ENCODE measurements at regions of chr4 and their contacts with region 1.

Region 1: DNA sequence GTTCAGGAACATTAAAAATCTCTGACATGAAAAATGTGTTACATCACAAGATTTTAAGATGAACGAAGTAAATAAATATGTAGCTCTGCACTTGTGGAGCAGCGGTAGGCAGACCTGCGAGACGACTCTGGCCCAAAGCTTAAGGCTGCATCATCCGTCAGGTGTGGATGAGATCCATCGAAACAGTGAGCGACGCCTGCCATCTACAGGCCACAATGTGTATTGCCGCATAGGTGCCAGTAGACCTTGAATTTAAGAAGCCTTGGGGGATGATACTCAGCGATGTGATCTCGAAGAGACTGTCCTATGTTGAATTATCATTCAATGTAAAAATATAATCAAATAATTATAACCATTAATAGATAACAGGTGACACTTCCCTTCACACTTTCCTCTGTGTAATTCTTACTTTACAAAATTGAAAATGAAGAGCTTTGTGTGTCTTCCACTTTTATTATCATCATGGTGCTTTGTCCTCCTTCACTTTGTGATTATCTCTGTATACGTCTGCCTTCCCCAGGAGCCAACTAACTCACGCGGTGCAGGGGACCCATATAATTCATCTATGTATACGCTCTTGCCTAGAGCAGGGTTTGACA is 851.0 kb downstream of the RAB28 start:
- DNase-seq: peak; percentile 87
- H3K4me3 Mint-ChIP-seq: no peak overlapping the region
- H3K27ac Mint-ChIP-seq: no peak overlapping the region
- H3K4me1 Mint-ChIP-seq: no peaks in the 10 kb centered on the region
- H3K27me3 Mint-ChIP-seq: peaks cover 21% of the 10 kb centered on the region

Region 2: DNA sequence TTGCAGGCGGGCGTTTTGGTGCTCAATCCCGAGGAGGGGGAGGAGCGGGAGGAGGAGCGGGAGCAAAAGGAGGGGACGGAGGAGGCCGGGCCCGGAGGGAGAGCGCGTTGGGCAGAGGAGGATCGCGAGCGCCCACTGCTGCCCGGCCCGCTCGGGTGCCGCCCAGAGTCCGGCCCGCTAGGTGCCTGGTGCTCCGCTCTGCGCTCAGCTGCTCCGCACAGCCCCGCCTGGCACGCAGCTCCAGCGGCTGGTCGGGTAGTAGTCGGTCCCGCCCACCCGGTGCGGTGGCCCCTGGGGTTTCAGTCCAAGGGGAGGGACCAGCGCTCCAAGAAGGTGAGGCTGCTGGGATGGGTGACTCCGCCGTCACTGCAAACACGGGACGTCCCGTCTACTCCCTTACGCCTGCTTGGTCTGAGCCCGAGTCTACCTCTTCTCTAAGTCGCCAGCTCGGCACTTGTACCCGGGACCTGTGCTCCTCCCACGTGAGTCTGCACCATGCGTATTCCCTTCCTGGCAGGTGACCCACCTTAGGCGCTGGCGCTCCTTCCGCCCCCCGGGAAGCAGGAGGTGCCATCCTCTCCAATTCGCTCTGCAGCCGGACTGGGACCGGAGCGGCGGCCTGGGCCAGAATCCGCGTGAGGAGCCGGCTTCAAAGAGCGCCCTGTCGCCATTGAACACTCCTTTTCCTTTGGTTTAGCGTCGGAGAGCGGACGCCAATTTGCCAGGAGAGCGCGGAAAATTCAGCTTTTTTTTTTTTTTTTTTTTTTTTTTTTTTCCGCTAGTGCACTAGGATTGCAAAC is 1204.1 kb before region 1 on chr4:
- CTCF ChIA-PET with region 1: no interaction called
- intact Hi-C with region 1: loop called (anchors 10 kb)
- DNase-seq: peak; percentile 64
- H3K4me3 Mint-ChIP-seq: peak overlapping the region; percentile 63
- H3K27ac Mint-ChIP-seq: no peak overlapping the region
- H3K4me1 Mint-ChIP-seq: peaks cover 14% of the 10 kb centered on the region
- H3K27me3 Mint-ChIP-seq: peaks cover 31% of the 10 kb centered on the region

Region 3: DNA sequence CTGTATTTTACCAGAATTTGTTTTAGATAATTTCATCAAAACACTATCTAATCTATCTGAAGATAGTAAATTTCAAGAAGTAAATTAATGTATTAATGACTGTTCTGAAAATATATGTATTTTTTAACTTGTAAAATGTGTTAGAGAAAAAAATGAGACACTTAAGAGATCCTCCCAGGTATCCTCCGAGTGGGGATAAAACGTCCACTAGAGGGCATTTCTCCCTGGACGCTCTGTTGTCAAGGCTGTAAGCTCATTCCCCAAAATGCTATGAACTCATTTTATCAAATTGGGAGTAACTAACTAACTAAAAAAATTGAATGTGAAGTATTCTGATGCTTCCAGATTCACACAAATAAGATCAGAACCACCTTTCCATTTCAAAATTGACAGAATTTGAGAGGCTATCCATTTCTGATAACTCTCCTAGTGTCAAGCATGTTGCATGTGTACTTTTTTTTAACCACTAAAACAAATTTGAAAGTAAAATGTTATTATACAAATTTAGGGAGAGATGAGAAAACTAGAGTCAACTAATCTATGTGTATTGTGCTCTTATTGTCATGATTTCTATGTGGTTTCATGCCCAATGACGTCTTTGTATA is 867.2 kb before region 1 on chr4:
- CTCF ChIA-PET with region 1: interaction called, 5 read pairs
- intact Hi-C with region 1: loop called (anchors 1 kb)
- DNase-seq: peak; percentile 32
- H3K4me3 Mint-ChIP-seq: no peak overlapping the region
- H3K27ac Mint-ChIP-seq: no peak overlapping the region
- H3K4me1 Mint-ChIP-seq: no peaks in the 10 kb centered on the region
- H3K27me3 Mint-ChIP-seq: peaks cover 6% of the 10 kb centered on the region

Region 4: GRCh38 chr4:12041828-12042227 is 591.3 kb before region 1 on chr4:
- CTCF ChIA-PET with region 1: no interaction called
- intact Hi-C with region 1: loop called (anchors 10 kb)
- DNase-seq: no peak
- H3K4me3 Mint-ChIP-seq: no peak overlapping the region
- H3K27ac Mint-ChIP-seq: no peak overlapping the region
- H3K4me1 Mint-ChIP-seq: no peaks in the 10 kb centered on the region
- H3K27me3 Mint-ChIP-seq: no peaks in the 10 kb centered on the region

Region 5: GRCh38 chr4:12658146-12658545 is 25.0 kb after region 1 on chr4:
- CTCF ChIA-PET with region 1: no interaction called
- intact Hi-C with region 1: no loop called
- DNase-seq: no peak
- H3K4me3 Mint-ChIP-seq: no peak overlapping the region
- H3K27ac Mint-ChIP-seq: no peak overlapping the region
- H3K4me1 Mint-ChIP-seq: no peaks in the 10 kb centered on the region
- H3K27me3 Mint-ChIP-seq: peaks cover 2% of the 10 kb centered on the region

Measured in activated naive CD4-positive, alpha-beta T cell treated with anti-CD3 and anti-CD28 coated beads for 36 hours (primary cell).